GM13976 (cell line): ENCODE measurements at regions of chr10 and their contacts with region 1.

Region 1: GRCh38 chr10:119693262-119693957 is 32.4 kb upstream of the INPP5F start:
- DNase-seq: peak; percentile 85
- CTCF ChIP-seq: no peak

Region 2: DNA sequence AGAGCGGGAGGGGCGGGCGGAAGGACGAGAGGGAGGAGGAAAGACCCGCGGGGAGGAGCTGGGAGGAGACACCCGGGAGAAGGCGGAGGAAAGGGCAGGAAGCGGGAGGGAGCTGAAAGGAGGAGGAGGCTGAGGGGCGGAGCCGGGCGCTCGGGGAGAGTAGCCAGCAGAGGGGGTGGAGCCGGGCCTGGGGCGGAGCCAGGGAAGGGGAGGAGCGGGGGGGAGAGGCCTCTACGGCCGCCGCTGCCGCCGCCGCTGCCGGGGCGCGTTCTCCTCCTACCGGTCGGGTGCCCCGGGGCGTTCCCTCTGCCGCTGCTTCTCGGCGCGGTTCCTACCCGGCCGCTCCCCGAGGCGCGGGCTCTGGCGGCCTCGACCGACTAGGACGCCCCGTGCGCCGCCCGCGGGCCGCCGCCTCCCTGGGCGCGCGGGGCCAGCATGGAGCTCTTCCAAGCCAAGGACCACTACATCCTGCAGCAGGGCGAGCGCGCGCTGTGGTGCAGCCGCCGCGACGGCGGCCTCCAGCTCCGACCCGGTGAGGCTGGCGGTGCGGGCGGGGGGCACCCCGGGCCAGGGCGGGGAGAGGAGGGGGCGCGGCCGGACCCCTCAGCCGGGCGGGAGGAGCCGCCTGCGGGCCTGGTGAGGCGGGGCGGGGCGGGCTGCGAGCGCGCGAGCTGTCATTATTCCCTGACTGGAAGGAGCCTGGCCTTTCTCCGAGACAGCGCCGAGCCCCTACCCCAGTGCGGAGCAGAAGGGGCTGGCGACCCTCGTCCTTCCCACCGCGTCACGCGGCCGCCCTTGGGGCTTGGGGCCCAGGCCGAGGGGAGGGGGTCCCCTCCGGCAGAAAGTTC is 32.6 kb after region 1 on chr10 and contains the start of gene INPP5F:
- in situ Hi-C with region 1: loop called (anchors 5 kb)
- DNase-seq: peak; percentile 100
- CTCF ChIP-seq: peak; percentile 27